ENCODE measurements at regions of chr5 and their contacts with region 1.

Region 1: GRCh38 chr5:41776435-41776834 is 93.8 kb downstream of the OXCT1 start:
- DNase-seq: no peak
- H3K4me3 ChIP-seq: no peak overlapping the region
- H3K27ac ChIP-seq: no peak overlapping the region
- H3K4me1 ChIP-seq: no peaks in the 10 kb centered on the region
- H3K27me3 ChIP-seq: no peaks in the 10 kb centered on the region
- CTCF ChIP-seq: no peak

Region 2: GRCh38 chr5:41661254-41661653 is 115.2 kb before region 1 on chr5:
- CTCF ChIA-PET with region 1: no interaction called
- dilution Hi-C with region 1: no loop called
- in situ Hi-C with region 1: no loop called
- intact Hi-C with region 1: no loop called
- DNase-seq: no peak
- H3K4me3 ChIP-seq: no peak overlapping the region
- H3K27ac ChIP-seq: no peak overlapping the region
- H3K4me1 ChIP-seq: no peaks in the 10 kb centered on the region
- H3K27me3 ChIP-seq: no peaks in the 10 kb centered on the region
- CTCF ChIP-seq: no peak

Region 3: DNA sequence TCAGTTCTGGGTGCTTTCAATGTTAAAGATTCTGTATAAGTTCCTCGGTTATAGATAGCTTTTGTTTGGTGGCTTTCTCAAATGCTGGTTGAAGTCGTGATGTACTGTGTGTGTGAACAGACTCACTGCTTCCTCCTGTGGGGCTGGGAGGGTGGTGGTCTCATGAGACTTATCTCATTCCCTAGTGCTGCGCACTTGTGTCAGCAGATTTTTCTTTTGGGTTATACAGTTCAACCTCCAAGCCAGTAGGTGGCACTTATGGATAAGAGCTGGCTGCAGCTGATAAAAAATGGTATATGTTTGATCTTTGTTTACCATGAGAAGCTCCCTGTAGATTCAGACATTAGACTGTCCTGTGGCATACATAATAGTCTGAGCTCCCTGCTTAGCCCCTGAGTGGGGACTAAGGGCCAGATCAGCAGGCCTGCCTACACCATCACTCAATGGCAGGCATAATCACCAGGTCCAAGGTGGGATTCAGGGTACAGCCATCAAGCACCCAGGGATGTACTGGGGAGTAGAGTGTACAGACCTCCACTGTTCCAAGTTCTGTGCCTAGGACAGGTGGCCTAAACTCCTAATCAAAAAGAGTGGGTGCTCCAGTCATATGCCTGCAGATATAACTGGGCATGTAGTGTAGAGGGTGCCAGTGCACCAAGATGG is 80.4 kb before region 1 on chr5:
- CTCF ChIA-PET with region 1: interaction called, 23 read pairs
- dilution Hi-C with region 1: no loop called
- in situ Hi-C with region 1: no loop called
- intact Hi-C with region 1: no loop called
- DNase-seq: no peak
- H3K4me3 ChIP-seq: no peak overlapping the region
- H3K27ac ChIP-seq: no peak overlapping the region
- H3K4me1 ChIP-seq: no peaks in the 10 kb centered on the region
- H3K27me3 ChIP-seq: peaks cover 2% of the 10 kb centered on the region
- CTCF ChIP-seq: peak; percentile 14 to 32

Region 4: DNA sequence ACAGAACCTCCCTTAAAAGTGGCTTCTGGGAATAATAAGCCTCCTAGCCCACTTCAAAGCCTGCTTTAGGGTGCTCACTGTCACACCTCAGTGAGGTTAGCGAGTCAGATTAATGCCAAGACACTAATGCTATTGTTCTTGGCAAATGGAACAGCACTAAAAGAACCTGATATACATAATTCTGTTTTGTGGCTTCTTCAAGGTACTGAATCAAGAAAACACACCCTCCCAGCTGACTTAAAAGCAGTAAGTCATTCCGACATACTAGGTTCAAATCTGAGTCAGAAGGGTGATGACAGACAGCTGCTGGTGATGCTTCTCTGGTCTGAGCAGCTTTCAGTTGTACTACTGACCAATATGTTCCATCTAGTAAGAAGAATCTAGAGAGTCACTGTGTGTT is 27.8 kb before region 1 on chr5:
- CTCF ChIA-PET with region 1: no interaction called
- dilution Hi-C with region 1: no loop called
- in situ Hi-C with region 1: no loop called
- intact Hi-C with region 1: no loop called
- DNase-seq: peak; percentile 75
- H3K4me3 ChIP-seq: no peak overlapping the region
- H3K27ac ChIP-seq: no peak overlapping the region
- H3K4me1 ChIP-seq: peaks cover 8% of the 10 kb centered on the region
- H3K27me3 ChIP-seq: no peaks in the 10 kb centered on the region
- CTCF ChIP-seq: no peak

Measured in mammary epithelial cell (primary cell).